ENCODE measurements at regions of chr6 and their contacts with region 1.

Region 1: GRCh38 chr6:75208298-75209183 is 2.7 kb upstream of the COL12A1 start:
- DNase-seq: peak; percentile 85
- ATAC-seq: peak; percentile 85
- H3K4me3 Mint-ChIP-seq: peak overlapping the region; percentile 17
- H3K27ac Mint-ChIP-seq: no peak overlapping the region
- H3K4me1 Mint-ChIP-seq: peaks cover 49% of the 10 kb centered on the region
- H3K27me3 Mint-ChIP-seq: peaks cover 77% of the 10 kb centered on the region

Region 2: GRCh38 chr6:73739096-73739495 is 1469.4 kb before region 1 on chr6:
- CTCF ChIA-PET with region 1: interaction called, 50 read pairs
- DNase-seq: no peak
- ATAC-seq: peak; percentile 58
- H3K4me3 Mint-ChIP-seq: no peak overlapping the region
- H3K27ac Mint-ChIP-seq: no peak overlapping the region
- H3K4me1 Mint-ChIP-seq: no peaks in the 10 kb centered on the region
- H3K27me3 Mint-ChIP-seq: no peaks in the 10 kb centered on the region

Region 3: DNA sequence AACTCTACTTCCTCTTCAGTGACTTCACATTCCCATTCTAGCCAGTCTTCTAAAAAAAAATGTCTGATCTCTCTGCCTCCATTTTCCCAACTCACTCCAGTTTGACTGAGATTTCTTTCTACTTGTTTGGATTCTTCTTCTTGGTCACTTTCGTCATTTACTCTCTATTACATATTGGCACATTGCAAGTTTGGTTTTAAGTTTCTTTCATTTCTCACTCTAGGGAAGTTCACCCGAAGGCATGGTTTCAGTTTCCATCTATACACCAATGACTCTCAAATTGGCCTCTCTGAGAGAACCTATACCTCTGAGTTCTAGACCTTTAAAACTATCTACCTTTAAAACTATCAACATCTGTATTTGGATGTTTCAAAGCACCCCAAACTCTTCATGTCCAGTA is 1461.3 kb before region 1 on chr6:
- CTCF ChIA-PET with region 1: interaction called, 10 read pairs
- DNase-seq: no peak
- ATAC-seq: peak; percentile 91
- H3K4me3 Mint-ChIP-seq: no peak overlapping the region
- H3K27ac Mint-ChIP-seq: no peak overlapping the region
- H3K4me1 Mint-ChIP-seq: peaks cover 1% of the 10 kb centered on the region
- H3K27me3 Mint-ChIP-seq: no peaks in the 10 kb centered on the region

Region 4: GRCh38 chr6:74091136-74091793 is 1117.3 kb before region 1 on chr6:
- CTCF ChIA-PET with region 1: interaction called, 22 read pairs
- DNase-seq: no peak
- ATAC-seq: no peak
- H3K4me3 Mint-ChIP-seq: no peak overlapping the region
- H3K27ac Mint-ChIP-seq: no peak overlapping the region
- H3K4me1 Mint-ChIP-seq: no peaks in the 10 kb centered on the region
- H3K27me3 Mint-ChIP-seq: no peaks in the 10 kb centered on the region

Region 5: DNA sequence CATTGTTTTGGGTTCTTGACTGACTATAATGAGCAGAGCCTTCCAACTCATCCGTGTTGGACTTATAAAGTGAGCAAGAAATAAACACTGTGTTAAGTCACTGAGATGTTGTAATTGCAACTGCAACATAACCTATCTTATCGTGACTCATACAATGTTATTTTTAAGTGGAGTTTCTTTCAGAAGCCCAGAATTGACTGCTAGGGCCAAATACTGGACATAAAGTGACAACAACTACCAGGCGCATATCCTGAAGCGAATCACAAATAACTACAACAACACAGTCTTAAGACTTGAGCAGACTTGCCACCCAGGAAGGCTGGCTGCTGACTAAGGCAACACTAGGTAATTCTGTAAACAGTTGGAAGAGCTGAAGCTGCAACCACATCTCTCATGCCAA is 329.3 kb before region 1 on chr6:
- CTCF ChIA-PET with region 1: no interaction called
- DNase-seq: no peak
- ATAC-seq: no peak
- H3K4me3 Mint-ChIP-seq: no peak overlapping the region
- H3K27ac Mint-ChIP-seq: no peak overlapping the region
- H3K4me1 Mint-ChIP-seq: no peaks in the 10 kb centered on the region
- H3K27me3 Mint-ChIP-seq: no peaks in the 10 kb centered on the region

Region 6: GRCh38 chr6:75230484-75231325 is 22.2 kb after region 1 on chr6:
- CTCF ChIA-PET with region 1: interaction called, 11 read pairs
- DNase-seq: no peak
- ATAC-seq: no peak
- H3K4me3 Mint-ChIP-seq: no peak overlapping the region
- H3K27ac Mint-ChIP-seq: no peak overlapping the region
- H3K4me1 Mint-ChIP-seq: peaks cover 2% of the 10 kb centered on the region
- H3K27me3 Mint-ChIP-seq: peaks cover 7% of the 10 kb centered on the region